Caco-2 (cell line): ENCODE measurements at regions of chr17 and their contacts with region 1.

Region 1: DNA sequence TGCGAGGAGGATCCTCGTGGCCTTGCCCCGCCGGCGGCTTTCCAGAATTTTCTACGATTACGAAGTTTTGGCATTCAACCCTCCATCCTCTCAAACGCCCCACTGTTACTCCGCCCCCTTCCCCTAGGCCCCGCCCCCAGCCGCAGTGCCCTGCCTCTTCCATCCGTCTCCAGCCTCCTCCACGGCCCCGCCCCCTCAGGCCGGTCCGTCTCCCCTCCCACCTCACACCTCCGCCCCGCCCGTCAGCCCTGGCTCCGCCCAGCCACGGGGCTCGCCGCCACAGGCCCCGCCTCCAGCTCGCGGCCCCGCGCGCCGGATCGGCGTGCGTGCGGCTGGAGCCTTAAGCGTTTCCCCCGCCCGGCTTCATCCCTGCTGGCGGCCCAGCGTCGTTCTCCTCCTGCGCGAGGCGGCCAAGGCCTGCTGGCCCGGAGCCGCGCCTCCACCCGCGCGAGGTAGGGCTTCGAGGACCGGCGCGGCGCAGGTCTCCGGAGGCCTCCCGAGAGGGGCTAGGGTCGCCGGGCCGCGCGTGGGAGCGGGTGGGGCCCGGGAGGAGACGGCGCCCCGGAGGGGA is at the starts of genes C17orf67 and DGKE:
- DNase-seq: peak; percentile 98 to 99
- H3K4me3 ChIP-seq: peak within 1 kb of the TSS; percentile 79
- H3K4me3 Mint-ChIP-seq: peak within 1 kb of the TSS; percentile 84
- H3K27ac Mint-ChIP-seq: peak within 1 kb of the TSS; percentile 75
- H3K4me1 ChIP-seq: peaks cover 6% of the 10 kb centered on the region
- H3K4me1 Mint-ChIP-seq: peaks cover 34% of the 10 kb centered on the region
- H3K27me3 ChIP-seq: no peaks in the 10 kb centered on the region
- H3K27me3 Mint-ChIP-seq: no peaks in the 10 kb centered on the region
- CTCF ChIP-seq: no peak
- total RNA-seq, gene C17orf67: 2.9 and 4.6 TPM in 2 replicates
- total RNA-seq, gene DGKE: 15.5 and 17.6 TPM in 2 replicates

Region 2: DNA sequence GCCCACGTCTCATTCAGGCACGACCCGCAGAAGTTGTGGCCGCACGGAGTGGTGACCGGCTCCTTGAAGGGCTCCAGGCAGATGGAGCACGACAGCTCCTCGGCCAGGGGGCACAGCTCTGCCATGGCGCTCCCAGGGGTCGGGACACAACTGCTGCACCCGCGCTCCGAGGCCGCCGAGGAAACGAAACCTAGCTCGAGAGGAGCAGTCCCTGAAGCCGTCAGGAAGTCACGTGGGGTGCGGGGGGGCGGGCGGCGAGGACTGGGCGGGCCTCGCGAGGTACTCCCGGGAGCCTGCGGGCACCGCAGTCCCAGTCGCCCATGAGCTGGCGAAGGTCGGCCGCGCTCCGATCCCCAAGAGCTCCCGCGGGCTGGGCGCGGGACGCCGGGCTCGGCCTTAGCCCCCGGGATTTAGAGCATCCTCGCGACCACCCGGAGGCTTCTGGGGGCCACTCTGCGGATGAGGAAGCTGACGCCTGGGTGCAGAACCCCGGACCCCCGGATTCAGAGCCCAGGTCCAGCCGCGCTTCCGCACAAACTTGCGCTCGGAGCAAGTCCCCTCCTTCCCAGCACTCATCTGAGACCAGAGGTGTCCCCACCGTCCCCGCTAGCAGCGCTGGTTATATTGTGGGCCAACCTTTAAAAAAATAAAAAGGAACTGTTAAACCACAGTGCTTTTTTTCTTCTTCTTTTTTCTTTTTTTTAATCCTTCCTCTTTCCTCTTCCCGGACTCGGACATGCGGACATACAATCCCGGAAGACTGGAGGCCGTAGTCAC is 80.2 kb after region 1 on chr17 and contains the start of gene TRIM25:
- CTCF ChIA-PET with region 1: no interaction called
- POLR2A ChIA-PET with region 1: interaction called, 11 read pairs
- intact Hi-C with region 1: loop called (anchors 1 kb)
- DNase-seq: peak; percentile 86 to 95
- H3K4me3 ChIP-seq: peak within 1 kb of the TSS; percentile 90
- H3K4me3 Mint-ChIP-seq: peak within 1 kb of the TSS; percentile 98
- H3K27ac Mint-ChIP-seq: peak within 1 kb of the TSS; percentile 94
- H3K4me1 ChIP-seq: peaks cover 25% of the 10 kb centered on the region
- H3K4me1 Mint-ChIP-seq: peaks cover 30% of the 10 kb centered on the region
- H3K27me3 ChIP-seq: no peaks in the 10 kb centered on the region
- H3K27me3 Mint-ChIP-seq: no peaks in the 10 kb centered on the region
- CTCF ChIP-seq: no peak
- total RNA-seq, gene TRIM25: 85.6 and 89.4 TPM in 2 replicates

Region 3: DNA sequence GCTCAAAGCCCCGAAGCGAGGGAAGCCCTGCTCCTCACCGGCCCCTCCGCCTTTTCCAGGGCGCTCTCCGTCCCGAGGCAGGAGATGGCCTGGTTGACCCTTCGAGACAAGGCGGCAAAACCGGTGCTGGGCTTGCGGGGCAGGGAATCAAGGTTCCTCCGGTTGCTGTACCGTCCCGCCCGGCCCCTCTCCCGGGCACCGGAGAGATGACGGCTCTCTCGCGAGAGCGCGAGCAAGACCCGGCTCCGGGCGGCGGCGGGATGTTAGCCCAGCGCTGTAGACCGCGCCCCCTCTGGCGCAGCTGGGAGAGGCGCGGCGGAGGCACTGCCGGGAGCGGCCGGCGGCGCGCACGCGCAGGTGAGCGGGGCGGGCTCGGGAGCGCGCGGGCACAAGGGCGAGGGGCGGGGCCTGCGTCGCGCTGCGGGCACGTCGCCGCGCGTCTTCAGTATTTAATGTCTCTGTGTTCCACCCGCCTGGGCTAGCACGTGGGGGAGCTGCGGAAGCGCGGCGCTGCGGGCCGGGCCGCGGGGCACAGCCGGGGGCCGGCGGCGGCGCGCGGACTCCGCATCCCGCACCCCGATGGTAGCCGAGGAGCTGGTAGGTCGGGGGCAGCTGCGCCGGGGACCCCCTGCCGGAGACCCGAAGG is 251.0 kb after region 1 on chr17 and contains the start of gene AKAP1:
- CTCF ChIA-PET with region 1: no interaction called
- POLR2A ChIA-PET with region 1: interaction called, 3 read pairs
- intact Hi-C with region 1: loop called (anchors 10 kb)
- DNase-seq: peak; percentile 95 to 98
- H3K4me3 ChIP-seq: peak within 1 kb of the TSS; percentile 89
- H3K4me3 Mint-ChIP-seq: peak within 1 kb of the TSS; percentile 90
- H3K27ac Mint-ChIP-seq: peak within 1 kb of the TSS; percentile 90
- H3K4me1 ChIP-seq: peaks cover 21% of the 10 kb centered on the region
- H3K4me1 Mint-ChIP-seq: peaks cover 27% of the 10 kb centered on the region
- H3K27me3 ChIP-seq: no peaks in the 10 kb centered on the region
- H3K27me3 Mint-ChIP-seq: no peaks in the 10 kb centered on the region
- CTCF ChIP-seq: peak in 1 of 2 experiments; percentile 26
- total RNA-seq, gene AKAP1: 87.1 and 87.2 TPM in 2 replicates